ENCODE measurements at regions of chr15 and their contacts with region 1.

Region 1: GRCh38 chr15:49620658-49621368 is at the starts of genes DTWD1 and FAM227B:
- H3K4me3 Mint-ChIP-seq: peak within 1 kb of the TSS; percentile 88
- H3K27ac Mint-ChIP-seq: peak within 1 kb of the TSS; percentile 94
- H3K4me1 Mint-ChIP-seq: peaks cover 29% of the 10 kb centered on the region
- H3K27me3 Mint-ChIP-seq: no peaks in the 10 kb centered on the region

Region 2: GRCh38 chr15:48810414-48811317 is 810.1 kb before region 1 on chr15 and contains the start of gene CEP152:
- intact Hi-C with region 1: loop called (anchors 2 kb)
- H3K4me3 Mint-ChIP-seq: peak within 1 kb of the TSS; percentile 86
- H3K27ac Mint-ChIP-seq: peak within 1 kb of the TSS; percentile 94
- H3K4me1 Mint-ChIP-seq: peaks cover 22% of the 10 kb centered on the region
- H3K27me3 Mint-ChIP-seq: peaks cover 3% of the 10 kb centered on the region

Region 3: DNA sequence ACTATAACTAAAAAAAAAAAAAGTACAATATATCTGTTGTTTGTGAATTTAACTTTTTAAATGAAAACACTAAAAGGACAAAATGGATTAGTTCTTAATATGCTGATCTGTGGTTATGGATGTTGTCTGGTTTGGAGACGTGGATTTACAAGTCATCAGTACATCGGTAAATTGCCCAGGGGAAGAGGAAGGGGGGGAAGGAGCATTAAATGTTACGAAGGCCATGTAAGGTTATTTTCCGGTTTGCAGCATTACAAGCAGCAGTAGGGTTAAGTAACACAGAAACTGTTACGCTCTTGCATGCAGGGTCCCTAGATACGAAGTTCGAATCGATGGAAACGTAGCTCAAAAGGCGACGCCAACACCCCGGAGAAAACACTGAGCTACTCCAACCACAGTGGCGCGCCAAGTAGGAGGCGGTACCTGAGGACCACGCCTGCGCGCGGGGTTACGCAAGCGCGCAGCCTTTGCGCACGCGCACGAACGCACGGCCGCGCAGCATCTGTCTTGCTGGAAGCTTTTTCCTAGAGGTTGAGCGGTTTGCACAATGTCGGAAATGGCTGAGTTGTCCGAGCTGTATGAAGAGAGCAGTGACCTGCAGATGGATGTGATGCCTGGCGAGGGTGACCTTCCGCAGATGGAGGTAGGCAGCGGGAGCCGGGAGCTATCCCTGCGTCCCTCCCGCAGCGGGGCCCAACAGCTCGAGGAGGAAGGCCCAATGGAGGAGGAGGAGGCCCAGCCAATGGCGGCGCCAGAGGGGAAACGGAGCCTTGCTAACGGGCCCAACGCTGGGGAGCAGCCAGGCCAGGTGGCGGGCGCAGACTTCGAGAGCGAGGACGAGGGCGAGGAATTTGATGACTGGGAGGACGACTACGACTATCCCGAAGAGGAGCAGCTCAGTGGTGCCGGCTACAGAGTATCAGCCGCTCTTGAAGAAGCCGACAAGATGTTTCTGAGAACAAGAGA is 742.9 kb before region 1 on chr15 and contains the start of gene EID1:
- intact Hi-C with region 1: loop called (anchors 10 kb)
- H3K4me3 Mint-ChIP-seq: peak within 1 kb of the TSS; percentile 98
- H3K27ac Mint-ChIP-seq: peak within 1 kb of the TSS; percentile 92
- H3K4me1 Mint-ChIP-seq: peaks cover 23% of the 10 kb centered on the region
- H3K27me3 Mint-ChIP-seq: peaks cover 3% of the 10 kb centered on the region

Region 4: GRCh38 chr15:49046220-49047102 is 574.4 kb before region 1 on chr15 and contains the start of gene SECISBP2L:
- intact Hi-C with region 1: loop called (anchors 5 kb)
- H3K4me3 Mint-ChIP-seq: peak within 1 kb of the TSS; percentile 94
- H3K27ac Mint-ChIP-seq: peak within 1 kb of the TSS; percentile 91
- H3K4me1 Mint-ChIP-seq: peaks cover 29% of the 10 kb centered on the region
- H3K27me3 Mint-ChIP-seq: no peaks in the 10 kb centered on the region

Region 5: GRCh38 chr15:49169880-49170597 is 450.8 kb before region 1 on chr15 and contains the start of gene GALK2:
- intact Hi-C with region 1: loop called (anchors 5 kb)
- H3K4me3 Mint-ChIP-seq: peak within 1 kb of the TSS; percentile 84
- H3K27ac Mint-ChIP-seq: peak within 1 kb of the TSS; percentile 94
- H3K4me1 Mint-ChIP-seq: peaks cover 36% of the 10 kb centered on the region
- H3K27me3 Mint-ChIP-seq: no peaks in the 10 kb centered on the region

Region 6: DNA sequence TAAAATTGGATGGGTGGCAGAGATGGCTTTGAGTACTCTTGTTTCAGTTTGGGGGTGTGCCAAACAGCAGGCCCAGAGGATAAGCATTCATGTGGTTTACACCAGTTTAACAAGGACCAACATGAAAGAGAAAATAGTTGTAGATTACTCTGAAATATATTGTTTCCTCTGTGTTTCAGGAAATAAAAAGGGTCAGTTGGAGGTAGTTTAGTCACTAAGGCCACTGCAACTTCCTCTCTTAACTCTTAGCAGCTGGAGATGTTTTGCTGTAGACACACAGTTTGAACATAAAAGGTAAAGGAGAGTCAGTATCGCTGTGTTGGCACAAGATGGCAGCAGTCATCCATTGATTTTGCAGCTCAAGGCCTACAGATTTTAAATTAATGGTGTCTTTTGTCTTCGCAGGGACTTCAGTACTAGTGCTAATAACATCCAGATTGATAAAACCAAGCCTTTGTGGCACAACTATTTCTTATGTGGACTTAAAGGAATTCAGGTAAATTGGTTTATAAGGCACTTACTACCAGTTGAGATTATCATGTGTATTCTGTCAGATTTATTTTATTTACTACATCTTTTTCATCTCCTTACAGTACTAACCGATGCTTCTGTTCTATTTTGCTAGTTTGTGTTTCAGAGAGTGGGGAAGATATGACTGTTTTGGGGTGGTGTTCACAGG is 385.2 kb before region 1 on chr15:
- intact Hi-C with region 1: loop called (anchors 10 kb)
- H3K4me3 Mint-ChIP-seq: no peak overlapping the region
- H3K27ac Mint-ChIP-seq: no peak overlapping the region
- H3K4me1 Mint-ChIP-seq: peaks cover 43% of the 10 kb centered on the region
- H3K27me3 Mint-ChIP-seq: no peaks in the 10 kb centered on the region

Region 7: DNA sequence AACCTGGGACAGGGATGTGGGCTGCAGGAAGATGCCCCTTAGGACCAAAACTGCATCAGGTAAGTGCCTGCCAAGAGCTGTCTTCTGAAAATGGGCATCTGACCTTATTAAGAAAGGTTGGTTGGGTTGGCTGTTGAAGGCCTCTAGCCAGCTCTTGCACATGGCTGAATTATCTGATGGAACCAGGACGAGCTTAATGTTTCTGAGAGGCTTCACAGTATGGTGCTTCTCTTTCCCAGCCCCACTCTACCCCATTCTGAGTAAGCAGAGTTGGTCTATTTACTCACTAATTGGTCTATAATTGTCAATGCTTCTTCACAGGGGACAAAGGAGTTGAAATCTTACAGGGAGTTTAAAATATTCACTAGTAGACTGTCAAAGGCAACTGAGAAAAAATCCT is 48.5 kb after region 1 on chr15:
- intact Hi-C with region 1: no loop called
- H3K4me3 Mint-ChIP-seq: no peak overlapping the region
- H3K27ac Mint-ChIP-seq: no peak overlapping the region
- H3K4me1 Mint-ChIP-seq: peaks cover 5% of the 10 kb centered on the region
- H3K27me3 Mint-ChIP-seq: no peaks in the 10 kb centered on the region

Measured in dendritic cell treated with granulocyte-macrophage colony-stimulating factor and Interleukin-4, amounts not matched to agents 40 ng/mL and 50 ng/mL, for 4 days (primary cell).